ENCODE measurements at regions of chr3 and their contacts with region 1.

Region 1: DNA sequence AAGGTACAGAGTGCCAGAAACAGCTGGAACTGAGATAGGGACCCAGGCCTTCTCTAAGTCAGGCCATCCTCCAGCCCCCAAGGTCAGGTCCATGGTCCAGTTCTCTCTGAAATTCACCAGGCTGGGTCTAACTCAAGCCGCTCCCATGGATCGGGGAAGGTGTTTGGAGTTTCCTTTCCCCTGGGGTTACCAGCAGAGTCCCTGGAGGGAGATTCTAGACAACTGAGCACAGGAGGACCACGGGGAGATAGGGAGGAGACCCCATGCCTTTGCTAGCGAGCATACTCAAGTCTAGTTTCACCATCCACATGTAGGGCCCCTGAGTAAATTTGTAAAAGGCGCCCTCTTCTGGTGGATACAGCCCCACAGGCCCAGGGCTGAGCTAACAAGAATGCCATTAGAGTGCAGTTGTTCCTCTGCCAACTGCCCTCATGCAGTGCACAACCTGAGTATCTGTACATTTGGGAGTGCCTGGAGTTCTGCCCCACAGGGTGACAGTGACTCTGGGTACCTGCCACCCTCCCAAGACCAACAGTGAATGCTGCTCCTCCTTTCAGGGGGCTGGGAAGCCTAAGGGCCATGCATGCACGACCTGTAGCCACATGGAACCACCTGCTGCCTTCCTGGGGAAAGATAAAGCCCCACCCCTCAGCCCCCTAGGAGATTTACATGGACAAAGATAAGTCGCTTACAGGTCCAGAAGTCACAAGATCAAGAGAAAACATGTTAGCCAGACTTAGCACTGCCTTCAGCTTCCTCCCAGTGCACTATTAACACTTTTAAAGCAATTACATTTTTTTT is 89.0 kb downstream of the IQSEC1 start:
- DNase-seq: peak in 4 of 5 donors; percentile 23 to 72 (median 48)
- H3K4me3 ChIP-seq: no peak overlapping the region
- H3K4me3 Mint-ChIP-seq: peak overlapping the region in 1 of 7 donors; percentile 13
- H3K27ac ChIP-seq: no peak overlapping the region
- H3K27ac Mint-ChIP-seq: peak overlapping the region in 6 of 8 donors; percentile 30 to 96 (median 72)
- H3K4me1 ChIP-seq: peaks cover 40% of the 10 kb centered on the region
- H3K4me1 Mint-ChIP-seq: peaks cover 61 to 83% (median 64%) of the 10 kb centered on the region in 3 donors
- H3K27me3 ChIP-seq: no peaks in the 10 kb centered on the region
- H3K27me3 Mint-ChIP-seq: no peaks in the 10 kb centered on the region

Region 2: GRCh38 chr3:12966847-12967605 is 17.2 kb before region 1 on chr3:
- CTCF ChIA-PET with region 1: interaction called, 14 read pairs
- POLR2A ChIA-PET with region 1: no interaction called
- DNase-seq: peak in 1 of 5 donors; percentile 14
- H3K4me3 ChIP-seq: peak overlapping the region; percentile 20
- H3K4me3 Mint-ChIP-seq: peak overlapping the region; percentile 68 to 93 (median 76)
- H3K27ac ChIP-seq: peak overlapping the region; percentile 17
- H3K27ac Mint-ChIP-seq: peak overlapping the region in 7 of 8 donors; percentile 36 to 99 (median 73)
- H3K4me1 ChIP-seq: peaks cover 61% of the 10 kb centered on the region
- H3K4me1 Mint-ChIP-seq: peaks cover 72 to 86% (median 78%) of the 10 kb centered on the region in 3 donors
- H3K27me3 ChIP-seq: no peaks in the 10 kb centered on the region
- H3K27me3 Mint-ChIP-seq: no peaks in the 10 kb centered on the region

Region 3: GRCh38 chr3:12973827-12974226 is 10.4 kb before region 1 on chr3:
- CTCF ChIA-PET with region 1: interaction called, 14 read pairs
- POLR2A ChIA-PET with region 1: no interaction called
- DNase-seq: no peak
- H3K4me3 ChIP-seq: no peak overlapping the region
- H3K4me3 Mint-ChIP-seq: peak overlapping the region in 2 of 7 donors; percentile 8 to 38
- H3K27ac ChIP-seq: no peak overlapping the region
- H3K27ac Mint-ChIP-seq: peak overlapping the region in 6 of 8 donors; percentile 38 to 68 (median 54)
- H3K4me1 ChIP-seq: peaks cover 19% of the 10 kb centered on the region
- H3K4me1 Mint-ChIP-seq: peaks cover 59 to 82% (median 67%) of the 10 kb centered on the region in 3 donors
- H3K27me3 ChIP-seq: no peaks in the 10 kb centered on the region
- H3K27me3 Mint-ChIP-seq: no peaks in the 10 kb centered on the region

Region 4: DNA sequence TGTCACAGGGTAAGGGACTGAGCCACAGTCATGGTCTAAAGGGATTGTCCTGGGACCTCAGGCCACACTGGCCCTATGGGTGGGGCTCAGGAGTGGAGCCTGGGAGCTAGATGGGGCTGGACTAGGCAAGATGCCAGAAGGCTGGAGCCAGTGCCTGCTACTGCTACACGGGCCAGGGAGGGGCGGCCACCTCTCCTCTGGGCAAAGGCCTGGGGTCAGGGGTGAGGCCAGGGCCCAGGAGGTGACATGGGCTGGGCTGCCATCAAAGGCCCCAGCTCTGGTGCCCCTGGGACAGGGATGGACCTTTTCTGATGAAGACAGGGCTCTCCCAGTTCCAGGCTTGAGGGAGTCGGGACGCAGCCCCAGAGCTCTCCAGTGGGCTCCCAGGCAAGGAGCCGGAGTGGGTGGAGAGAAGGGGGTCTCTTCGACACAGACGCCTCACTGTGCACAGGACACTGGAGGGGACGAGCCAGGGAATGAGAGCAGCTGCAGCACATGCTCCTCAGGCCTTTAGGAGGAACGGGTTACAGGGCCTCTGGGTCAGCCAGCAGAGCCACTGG is 151.1 kb after region 1 on chr3:
- CTCF ChIA-PET with region 1: no interaction called
- POLR2A ChIA-PET with region 1: no interaction called
- DNase-seq: no peak
- H3K4me3 ChIP-seq: no peak overlapping the region
- H3K4me3 Mint-ChIP-seq: no peak overlapping the region
- H3K27ac ChIP-seq: no peak overlapping the region
- H3K27ac Mint-ChIP-seq: no peak overlapping the region
- H3K4me1 ChIP-seq: no peaks in the 10 kb centered on the region
- H3K4me1 Mint-ChIP-seq: no peaks in the 10 kb centered on the region
- H3K27me3 ChIP-seq: no peaks in the 10 kb centered on the region
- H3K27me3 Mint-ChIP-seq: peaks cover 19 to 43% of the 10 kb centered on the region in 2 donors

Measured in CD8-positive, alpha-beta memory T cell (primary cell).